ENCODE measurements at regions of chr16 and their contacts with region 1.

Region 1: DNA sequence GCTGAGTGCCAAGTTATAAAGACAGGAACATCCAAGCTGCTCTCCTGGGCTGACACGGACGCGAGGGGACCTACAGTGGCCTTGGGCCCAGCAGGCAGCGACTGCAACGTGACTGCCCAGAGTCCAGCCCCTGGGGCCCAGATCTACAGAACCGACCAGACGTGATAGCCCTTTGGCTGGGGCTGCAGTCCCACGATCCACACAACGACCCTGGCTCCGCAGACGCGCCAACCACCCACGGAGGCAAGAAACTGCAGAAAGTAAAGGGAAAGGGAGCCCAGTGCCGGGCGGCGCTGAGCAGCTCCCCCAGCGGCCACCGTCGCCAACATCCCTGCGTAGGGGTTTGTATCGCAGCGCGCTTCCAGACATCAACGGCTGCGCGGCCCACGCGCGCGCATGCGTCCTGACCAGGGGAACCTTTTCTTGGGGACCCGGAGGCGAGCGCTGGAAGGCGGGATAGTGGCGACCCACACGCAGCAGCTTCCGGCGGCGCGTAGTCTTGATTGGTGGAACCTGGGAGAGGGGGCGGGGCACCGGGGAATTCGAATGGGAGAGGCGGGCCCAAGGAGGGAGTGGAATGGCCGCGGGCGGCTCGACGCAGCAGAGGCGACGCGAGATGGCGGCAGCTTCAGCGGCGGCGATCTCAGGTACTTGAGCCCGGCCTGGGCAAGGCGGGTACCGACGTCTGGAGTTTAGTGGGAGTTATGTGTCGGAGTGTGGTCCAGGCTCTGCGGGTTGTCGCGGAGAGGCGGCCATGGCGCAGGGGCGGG is at the start of gene KIF22:
- DNase-seq: peak; percentile 100
- ATAC-seq: peak; percentile 97
- H3K4me3 Mint-ChIP-seq: peak within 1 kb of the TSS; percentile 96
- H3K27ac Mint-ChIP-seq: peak within 1 kb of the TSS; percentile 96
- H3K4me1 Mint-ChIP-seq: peaks cover 45% of the 10 kb centered on the region
- H3K27me3 Mint-ChIP-seq: no peaks in the 10 kb centered on the region
- total RNA-seq, gene KIF22: 205 to 266 TPM

Region 2: GRCh38 chr16:29710227-29711219 is 79.8 kb before region 1 on chr16:
- CTCF ChIA-PET with region 1: interaction called, 10 read pairs
- DNase-seq: peak; percentile 63
- ATAC-seq: peak; percentile 98
- H3K4me3 Mint-ChIP-seq: no peak overlapping the region
- H3K27ac Mint-ChIP-seq: no peak overlapping the region
- H3K4me1 Mint-ChIP-seq: peaks cover 10% of the 10 kb centered on the region
- H3K27me3 Mint-ChIP-seq: peaks cover 4% of the 10 kb centered on the region

Region 3: DNA sequence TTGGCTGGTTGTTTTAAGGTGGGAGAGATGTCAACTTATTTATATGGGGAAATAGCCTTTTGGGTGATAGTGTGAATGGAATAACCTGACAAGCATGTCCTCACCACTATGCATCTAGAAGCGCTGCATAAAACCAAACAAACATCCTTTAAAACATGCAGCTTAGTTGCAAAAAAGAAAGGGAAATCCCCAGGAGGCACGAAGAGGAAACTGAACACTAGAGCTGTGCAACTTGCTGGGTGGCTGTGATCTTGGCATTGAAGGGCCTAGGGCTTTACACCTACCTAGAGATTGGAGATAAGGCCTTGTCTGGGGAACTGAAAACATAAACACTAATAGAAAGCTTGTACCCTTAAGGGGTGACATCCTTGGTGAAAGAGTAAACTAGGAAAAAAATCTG is 51.9 kb before region 1 on chr16:
- CTCF ChIA-PET with region 1: interaction called, 18 read pairs
- DNase-seq: peak; percentile 67
- ATAC-seq: peak; percentile 90
- H3K4me3 Mint-ChIP-seq: peak overlapping the region; percentile 14
- H3K27ac Mint-ChIP-seq: peak overlapping the region; percentile 89
- H3K4me1 Mint-ChIP-seq: peaks cover 56% of the 10 kb centered on the region
- H3K27me3 Mint-ChIP-seq: no peaks in the 10 kb centered on the region

Region 4: DNA sequence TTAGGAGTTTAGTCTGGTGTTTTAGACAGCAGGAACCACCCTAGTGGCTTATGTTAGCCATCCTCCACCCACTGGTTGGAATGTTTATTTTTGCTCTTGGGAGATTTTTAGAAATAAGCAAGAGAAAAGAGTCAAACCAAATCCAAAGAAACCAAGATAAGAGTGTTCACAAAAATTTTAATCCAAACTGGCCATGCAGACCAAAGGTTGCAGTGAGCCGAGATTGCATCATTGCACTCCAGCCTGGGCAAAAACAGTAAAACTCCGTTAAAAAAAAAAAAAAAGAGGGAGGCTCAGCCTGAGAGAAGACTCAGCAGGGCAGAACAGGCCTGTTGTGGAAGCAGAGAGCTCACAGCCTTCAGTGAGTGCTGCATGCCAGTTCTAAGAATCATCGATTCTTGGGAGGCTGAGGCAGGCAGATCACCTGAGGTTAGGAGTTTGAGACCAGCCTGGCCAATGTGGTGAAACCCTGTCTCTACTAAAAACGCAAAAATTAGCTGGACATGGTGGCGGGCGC is 32.4 kb before region 1 on chr16:
- CTCF ChIA-PET with region 1: interaction called, 24 read pairs
- DNase-seq: no peak
- ATAC-seq: no peak
- H3K4me3 Mint-ChIP-seq: no peak overlapping the region
- H3K27ac Mint-ChIP-seq: no peak overlapping the region
- H3K4me1 Mint-ChIP-seq: peaks cover 14% of the 10 kb centered on the region
- H3K27me3 Mint-ChIP-seq: peaks cover 2% of the 10 kb centered on the region

Region 5: DNA sequence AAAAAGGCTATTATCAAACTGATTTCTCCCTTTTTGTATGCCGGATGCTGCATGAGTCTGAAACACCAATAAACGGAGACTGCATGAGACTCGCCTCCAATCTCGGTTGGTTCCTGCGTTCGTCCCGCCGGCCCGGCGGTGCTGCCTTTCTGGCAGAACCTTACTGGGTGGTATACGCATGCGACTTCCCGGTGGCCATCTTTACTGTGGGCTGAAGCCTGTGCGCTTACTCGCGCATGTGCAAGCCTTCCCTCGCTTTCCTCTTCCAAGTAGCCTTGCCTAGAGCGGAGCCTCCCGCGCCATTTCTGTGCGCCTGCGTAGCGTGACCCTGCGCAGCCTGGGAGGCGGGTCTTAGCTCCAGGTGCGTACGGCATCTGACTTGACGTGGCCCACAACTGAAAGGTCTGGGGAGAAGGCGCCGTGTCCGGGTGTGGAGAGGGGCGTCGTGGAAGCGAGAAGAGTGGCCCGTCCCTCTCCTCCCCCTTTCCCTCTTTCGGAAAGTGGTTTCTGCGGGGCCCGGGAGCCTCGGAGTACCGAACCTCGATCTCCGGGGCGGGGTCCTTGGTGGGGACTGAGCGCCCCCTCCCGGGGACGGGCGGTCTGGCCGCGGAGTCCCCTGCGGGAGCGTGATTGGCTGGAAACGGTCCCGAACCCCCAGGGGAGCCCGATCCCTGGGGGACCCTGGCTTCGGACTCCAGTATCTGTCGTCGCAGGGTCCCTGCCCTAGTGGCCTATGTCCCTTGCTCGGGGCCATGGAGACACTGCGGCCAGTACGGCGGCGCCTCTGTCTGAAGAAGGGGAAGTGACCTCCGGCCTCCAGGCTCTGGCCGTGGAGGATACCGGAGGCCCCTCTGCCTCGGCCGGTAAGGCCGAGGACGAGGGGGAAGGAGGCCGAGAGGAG is 25.7 kb after region 1 on chr16 and contains the start of gene PAGR1:
- CTCF ChIA-PET with region 1: interaction called, 34 read pairs
- DNase-seq: peak; percentile 99
- ATAC-seq: peak; percentile 79
- H3K4me3 Mint-ChIP-seq: peak within 1 kb of the TSS; percentile 99
- H3K27ac Mint-ChIP-seq: peak within 1 kb of the TSS; percentile 88
- H3K4me1 Mint-ChIP-seq: peaks cover 65% of the 10 kb centered on the region
- H3K27me3 Mint-ChIP-seq: peaks cover 12% of the 10 kb centered on the region
- total RNA-seq, gene PAGR1: 34.3 to 35.2 TPM

Measured in activated CD8-positive, alpha-beta memory T cell treated with anti-CD3 and anti-CD28 coated beads, Interleukin-2, amount 10 ng/mL, durations not matched to agents 7 days and 5 days (primary cell).